A549 (cell line): ENCODE measurements at regions of chr5 and their contacts with region 1.

Region 1: DNA sequence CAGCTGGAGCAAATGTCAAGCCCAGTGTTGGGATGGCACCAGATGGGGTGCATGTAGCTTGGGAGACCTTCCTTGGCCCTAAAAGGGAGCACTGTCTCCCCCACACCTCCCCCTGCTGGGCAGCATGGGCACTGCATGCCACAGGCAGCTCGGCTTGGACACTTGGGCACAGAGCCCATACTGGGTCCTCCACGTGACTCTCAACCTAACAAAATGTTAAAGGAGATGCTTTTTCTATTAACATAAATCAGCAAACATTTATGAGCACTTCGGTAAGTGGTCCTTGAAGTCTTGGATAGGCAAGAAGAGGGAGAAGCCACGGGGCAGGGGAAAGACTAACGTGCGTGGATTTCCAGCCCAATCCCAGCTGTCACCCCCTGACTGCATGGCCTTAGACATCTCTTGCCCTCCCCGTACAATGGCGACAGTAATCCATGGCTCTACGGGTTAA is 23.9 kb upstream of the MAPK9 start:
- DNase-seq: peak; percentile 54 to 67
- ATAC-seq: peak; percentile 85 to 95
- H3K4me3 ChIP-seq: no peak overlapping the region
- H3K27ac ChIP-seq: no peak overlapping the region
- H3K4me1 ChIP-seq: no peaks in the 10 kb centered on the region
- CTCF ChIP-seq: peak; percentile 78
- EP300 ChIP-seq: no peak
- POLR2A ChIP-seq: no peak
- RAD21 ChIP-seq: peak; percentile 56 to 66

Region 2: DNA sequence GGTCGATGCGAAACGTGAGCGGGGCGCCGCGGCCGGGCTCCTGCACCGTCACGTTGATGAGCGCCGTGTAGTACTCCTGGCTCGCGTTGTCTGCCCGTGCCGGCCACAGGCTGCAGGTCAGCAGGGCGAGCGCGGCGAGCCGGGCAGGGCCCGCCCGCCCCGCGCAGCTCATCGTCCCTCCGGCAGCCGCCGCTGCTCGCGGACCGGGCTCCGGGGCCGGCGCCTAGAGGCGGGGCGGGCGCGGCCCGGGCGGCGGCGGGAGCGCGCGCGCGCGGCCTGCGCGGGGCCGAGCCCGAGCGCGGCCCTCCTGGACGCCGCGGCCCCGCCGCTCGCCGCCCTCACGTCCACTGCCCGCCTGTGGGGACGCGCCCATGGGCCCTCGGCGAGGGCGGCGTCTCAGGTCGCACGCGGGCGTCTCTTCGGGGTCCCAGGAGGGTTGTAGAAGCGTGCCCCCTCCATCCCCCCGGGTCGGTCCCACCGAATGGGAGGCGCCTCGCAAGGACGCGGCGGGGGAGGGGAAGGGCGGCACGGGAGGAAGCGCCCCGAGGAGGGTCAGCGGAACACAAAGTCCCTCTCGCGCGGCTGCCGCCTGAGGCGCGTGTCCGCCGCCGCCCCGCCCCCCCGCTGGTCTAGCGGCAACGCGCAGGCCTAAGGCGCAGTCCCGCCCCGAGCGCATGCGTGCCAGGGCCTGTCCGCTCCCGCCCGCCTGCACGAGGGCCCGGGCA is 244.1 kb before region 1 on chr5 and contains the start of gene RNF130:
- CTCF ChIA-PET with region 1: no interaction called
- POLR2A ChIA-PET with region 1: no interaction called
- DNase-seq: peak; percentile 87 to 95
- ATAC-seq: peak; percentile 82 to 90
- H3K4me3 ChIP-seq: peak within 1 kb of the TSS; percentile 97
- H3K27ac ChIP-seq: peak within 1 kb of the TSS; percentile 95 to 97
- H3K4me1 ChIP-seq: peaks cover 22% of the 10 kb centered on the region
- CTCF ChIP-seq: no peak
- EP300 ChIP-seq: no peak
- POLR2A ChIP-seq: peak; percentile 85
- RAD21 ChIP-seq: no peak
- polyA plus RNA-seq, gene RNF130: 50.1 and 57.1 TPM in 2 replicates

Region 3: DNA sequence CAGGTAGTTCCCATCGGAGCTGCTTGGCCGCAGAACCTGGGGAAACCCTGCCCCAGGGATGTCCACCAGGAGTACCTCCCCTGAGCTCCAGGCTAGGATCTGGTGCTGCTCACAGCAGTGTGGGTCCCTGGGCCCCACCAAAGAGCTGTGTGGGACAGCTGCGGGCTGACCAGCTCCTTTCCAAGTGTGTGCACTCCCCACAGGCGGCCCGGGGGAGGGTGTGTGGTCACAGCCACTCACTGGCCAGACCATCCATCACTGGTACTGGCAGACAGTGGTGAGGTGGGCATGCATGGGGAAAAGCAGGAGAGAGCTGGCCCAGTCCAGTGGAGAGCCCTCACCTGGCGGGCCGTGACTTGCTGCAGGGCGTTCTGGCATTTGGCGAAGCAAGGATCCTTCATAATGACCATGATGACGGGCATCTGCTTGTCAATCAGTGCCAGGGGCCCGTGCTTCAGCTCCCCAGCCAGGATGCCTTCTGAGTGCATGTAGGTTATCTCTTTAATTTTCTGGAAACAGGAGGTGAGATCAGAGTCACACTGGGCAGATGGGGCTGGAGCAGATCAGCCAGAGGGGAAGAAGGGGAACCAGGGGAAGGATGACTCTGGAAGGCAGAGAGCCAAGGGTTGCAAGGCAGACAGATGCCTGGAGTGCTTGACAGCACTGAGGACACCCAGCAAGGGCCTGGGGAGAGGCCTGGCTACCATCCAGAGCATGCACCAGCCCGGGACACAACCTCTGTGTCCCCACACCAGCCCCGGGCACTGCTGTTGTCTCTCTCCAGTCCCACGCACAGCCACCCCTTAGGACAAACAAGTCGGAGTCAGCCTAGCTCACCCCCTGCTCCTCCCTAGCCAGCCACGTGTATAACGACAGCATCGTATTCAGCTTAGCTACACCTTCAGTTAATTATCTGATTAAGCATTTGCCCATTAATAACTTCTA is 11.1 kb before region 1 on chr5:
- CTCF ChIA-PET with region 1: interaction called, 65 read pairs
- POLR2A ChIA-PET with region 1: no interaction called
- DNase-seq: no peak
- ATAC-seq: no peak; a peak in 1 of 6 replicates
- H3K4me3 ChIP-seq: no peak overlapping the region
- H3K27ac ChIP-seq: no peak overlapping the region
- H3K4me1 ChIP-seq: no peaks in the 10 kb centered on the region
- CTCF ChIP-seq: no peak
- EP300 ChIP-seq: no peak
- POLR2A ChIP-seq: no peak
- RAD21 ChIP-seq: no peak

Region 4: GRCh38 chr5:180333661-180334060 is 17.9 kb after region 1 on chr5:
- CTCF ChIA-PET with region 1: interaction called, 110 read pairs
- POLR2A ChIA-PET with region 1: interaction called, 3 read pairs
- DNase-seq: peak; percentile 81 to 85
- ATAC-seq: peak in 1 of 2 experiments; percentile 47; a peak in 3 of 6 replicates
- H3K4me3 ChIP-seq: no peak overlapping the region
- H3K27ac ChIP-seq: peak overlapping the region; percentile 82 to 87
- H3K4me1 ChIP-seq: peaks cover 58% of the 10 kb centered on the region
- CTCF ChIP-seq: no peak
- EP300 ChIP-seq: peak; percentile 47 to 54; a peak in 2 of 5 replicates
- POLR2A ChIP-seq: no peak
- RAD21 ChIP-seq: peak in 1 of 2 experiments; percentile 5; a peak in 1 of 5 replicates